Activated B cell treated with CpG ODN at 0.5 μM for 24 hours (primary cell): ENCODE measurements at regions of chr3 and their contacts with region 1.

Region 1: GRCh38 chr3:105868742-105869530 is at the start of gene CBLB:
- DNase-seq: peak; percentile 78
- ATAC-seq: peak; percentile 93
- H3K4me3 Mint-ChIP-seq: peak within 1 kb of the TSS; percentile 100
- H3K27ac Mint-ChIP-seq: peak within 1 kb of the TSS; percentile 99
- H3K4me1 Mint-ChIP-seq: peaks cover 53% of the 10 kb centered on the region
- H3K27me3 Mint-ChIP-seq: no peaks in the 10 kb centered on the region
- CTCF ChIP-seq: no peak
- total RNA-seq, gene CBLB: 69.2 and 78.1 TPM in 2 replicates

Region 2: DNA sequence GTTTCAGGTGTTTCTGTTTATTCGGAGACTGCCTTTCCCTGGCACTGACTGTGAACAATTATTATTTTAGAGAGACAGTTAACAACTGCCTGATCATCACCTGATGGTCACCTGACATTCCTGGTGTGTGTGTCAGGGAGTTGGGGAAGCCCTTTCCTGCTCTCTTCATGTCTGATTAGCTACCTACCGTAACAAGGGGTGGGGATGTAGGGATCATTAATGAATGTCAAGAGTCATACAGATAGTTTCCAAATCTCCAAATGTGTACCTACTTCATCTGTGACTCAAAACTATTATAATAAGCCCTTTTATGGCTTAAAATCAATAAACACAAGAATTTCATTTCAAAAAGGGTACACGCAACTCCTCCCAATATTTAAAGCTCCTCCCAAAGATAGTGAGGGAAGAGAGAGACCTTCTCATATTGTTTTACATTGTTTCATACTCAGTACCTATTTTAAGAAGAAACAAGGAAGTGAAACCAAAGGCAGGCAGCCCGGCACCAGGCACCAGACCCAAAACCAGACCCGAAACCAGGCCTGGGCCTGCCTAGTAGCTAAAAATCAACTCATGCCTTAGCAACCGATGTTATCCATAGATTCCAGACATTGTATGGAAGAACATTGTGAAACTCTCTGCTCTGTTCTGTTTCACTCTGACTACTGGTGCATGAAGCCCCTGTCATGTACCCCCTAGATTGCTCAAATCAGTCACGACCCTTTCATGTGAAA is 1347.2 kb before region 1 on chr3:
- CTCF ChIA-PET with region 1: no interaction called
- POLR2A ChIA-PET with region 1: no interaction called
- intact Hi-C with region 1: loop called (anchors 5 kb)
- DNase-seq: peak; percentile 49
- ATAC-seq: peak; percentile 51
- H3K4me3 Mint-ChIP-seq: peak overlapping the region; percentile 75
- H3K27ac Mint-ChIP-seq: peak overlapping the region; percentile 98
- H3K4me1 Mint-ChIP-seq: peaks cover 73% of the 10 kb centered on the region
- H3K27me3 Mint-ChIP-seq: no peaks in the 10 kb centered on the region
- CTCF ChIP-seq: no peak

Region 3: DNA sequence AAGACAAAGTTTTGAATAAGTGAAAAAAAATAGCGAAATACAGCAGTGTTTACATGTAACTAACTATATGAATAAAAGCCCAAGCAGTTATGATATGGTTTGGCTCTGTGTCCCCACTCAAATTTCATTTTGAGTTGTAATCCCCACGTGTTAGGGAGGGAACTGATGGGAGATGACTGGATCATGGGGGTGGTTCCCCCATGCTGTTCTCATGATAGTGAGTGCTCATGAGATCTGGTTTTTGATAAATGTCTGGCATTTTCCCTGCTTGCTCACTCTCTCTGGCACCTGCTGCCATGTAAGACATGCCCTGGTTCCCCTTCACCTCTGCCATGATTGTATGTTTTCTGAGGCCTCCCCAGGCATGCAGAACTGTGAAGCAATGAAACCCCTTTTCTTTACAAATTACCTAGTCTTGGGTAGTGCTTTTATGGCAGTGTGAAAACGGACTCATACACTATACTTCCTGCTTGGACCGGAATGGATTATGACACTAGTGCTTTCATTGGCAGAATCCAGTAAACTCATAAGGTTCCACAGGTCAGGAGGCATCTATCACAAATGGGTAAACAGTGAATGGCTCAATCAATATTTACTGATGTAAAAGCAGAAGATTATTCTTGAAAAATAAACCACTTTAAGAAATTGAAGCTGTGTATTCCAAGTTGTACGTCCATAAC is 192.2 kb before region 1 on chr3:
- CTCF ChIA-PET with region 1: no interaction called
- POLR2A ChIA-PET with region 1: no interaction called
- intact Hi-C with region 1: no loop called
- DNase-seq: no peak
- ATAC-seq: no peak
- H3K4me3 Mint-ChIP-seq: no peak overlapping the region
- H3K27ac Mint-ChIP-seq: no peak overlapping the region
- H3K4me1 Mint-ChIP-seq: peaks cover 2% of the 10 kb centered on the region
- H3K27me3 Mint-ChIP-seq: no peaks in the 10 kb centered on the region
- CTCF ChIP-seq: no peak

Region 4: GRCh38 chr3:105827959-105828358 is 41.0 kb before region 1 on chr3:
- CTCF ChIA-PET with region 1: no interaction called
- POLR2A ChIA-PET with region 1: interaction called, 13 read pairs
- intact Hi-C with region 1: no loop called
- DNase-seq: no peak
- ATAC-seq: no peak
- H3K4me3 Mint-ChIP-seq: no peak overlapping the region
- H3K27ac Mint-ChIP-seq: peak overlapping the region; percentile 50
- H3K4me1 Mint-ChIP-seq: peaks cover 72% of the 10 kb centered on the region
- H3K27me3 Mint-ChIP-seq: no peaks in the 10 kb centered on the region
- CTCF ChIP-seq: no peak

Region 5: DNA sequence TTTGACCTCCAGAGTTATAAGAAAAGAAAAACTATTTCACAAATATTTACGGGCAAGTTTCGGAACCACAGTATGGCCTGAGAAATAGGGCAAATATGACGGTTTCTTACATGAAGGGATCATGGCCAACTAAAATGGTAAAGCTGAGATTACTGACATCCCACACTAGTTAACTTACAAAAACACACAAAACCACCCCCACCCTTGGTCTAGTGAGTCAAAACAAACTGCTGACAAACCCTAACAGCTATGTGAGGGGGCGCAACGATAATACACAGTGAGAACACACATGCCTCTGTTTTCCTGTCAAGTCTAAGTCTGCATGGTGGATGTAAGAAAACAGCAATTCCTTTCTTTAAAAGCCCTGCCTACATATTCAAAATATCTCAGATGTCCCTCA is 32.4 kb before region 1 on chr3:
- CTCF ChIA-PET with region 1: no interaction called
- POLR2A ChIA-PET with region 1: interaction called, 26 read pairs
- intact Hi-C with region 1: loop called (anchors 1 kb)
- DNase-seq: no peak
- ATAC-seq: no peak
- H3K4me3 Mint-ChIP-seq: peak overlapping the region; percentile 72
- H3K27ac Mint-ChIP-seq: peak overlapping the region; percentile 82
- H3K4me1 Mint-ChIP-seq: peaks cover 63% of the 10 kb centered on the region
- H3K27me3 Mint-ChIP-seq: no peaks in the 10 kb centered on the region
- CTCF ChIP-seq: no peak

Region 6: GRCh38 chr3:105853801-105854432 is 15.0 kb before region 1 on chr3:
- CTCF ChIA-PET with region 1: no interaction called
- POLR2A ChIA-PET with region 1: interaction called, 18 read pairs
- intact Hi-C with region 1: loop called (anchors 1 kb)
- DNase-seq: peak; percentile 46
- ATAC-seq: peak; percentile 99
- H3K4me3 Mint-ChIP-seq: peak overlapping the region; percentile 66
- H3K27ac Mint-ChIP-seq: peak overlapping the region; percentile 99
- H3K4me1 Mint-ChIP-seq: peaks cover 51% of the 10 kb centered on the region
- H3K27me3 Mint-ChIP-seq: no peaks in the 10 kb centered on the region
- CTCF ChIP-seq: no peak

Region 7: GRCh38 chr3:107522510-107523288 is 1653.8 kb after region 1 on chr3 and contains the start of gene BBX:
- CTCF ChIA-PET with region 1: no interaction called
- POLR2A ChIA-PET with region 1: no interaction called
- intact Hi-C with region 1: loop called (anchors 5 kb)
- DNase-seq: peak; percentile 89
- ATAC-seq: peak; percentile 87
- H3K4me3 Mint-ChIP-seq: peak within 1 kb of the TSS; percentile 96
- H3K27ac Mint-ChIP-seq: peak within 1 kb of the TSS; percentile 98
- H3K4me1 Mint-ChIP-seq: peaks cover 37% of the 10 kb centered on the region
- H3K27me3 Mint-ChIP-seq: no peaks in the 10 kb centered on the region
- CTCF ChIP-seq: no peak
- total RNA-seq, gene BBX: 75.8 and 77.5 TPM in 2 replicates